ENCODE measurements at regions of chr12 and their contacts with region 1.

Region 1: GRCh38 chr12:442235-442884 is 17.4 kb upstream of the B4GALNT3 start:
- DNase-seq: no peak
- H3K4me3 ChIP-seq: no peak overlapping the region
- CTCF ChIP-seq: peak; percentile 74

Region 2: DNA sequence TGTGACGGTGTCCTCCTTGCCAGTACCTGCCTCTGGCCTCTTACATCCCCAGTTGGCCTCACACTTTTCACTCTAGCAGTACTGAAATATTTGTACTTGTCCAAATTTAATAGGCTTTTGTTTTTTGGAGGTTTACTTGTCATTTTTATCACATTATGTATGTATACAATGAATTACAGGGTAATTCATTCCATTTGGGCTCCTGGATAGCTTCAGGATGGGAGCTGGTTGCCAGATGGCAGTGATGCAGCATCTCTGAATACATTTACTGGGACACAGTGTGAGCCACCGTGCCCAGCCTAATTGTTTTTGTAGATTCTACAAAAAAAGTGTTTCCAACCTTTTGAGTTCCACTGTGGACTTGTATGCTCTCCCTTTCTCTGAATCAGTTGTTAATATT is 27.5 kb before region 1 on chr12:
- CTCF ChIA-PET with region 1: interaction called, 10 read pairs
- POLR2A ChIA-PET with region 1: no interaction called
- DNase-seq: no peak
- H3K4me3 ChIP-seq: no peak overlapping the region
- CTCF ChIP-seq: no peak

Region 3: GRCh38 chr12:464484-465267 is 22.3 kb after region 1 on chr12:
- CTCF ChIA-PET with region 1: interaction called, 157 read pairs
- POLR2A ChIA-PET with region 1: no interaction called
- DNase-seq: no peak
- H3K4me3 ChIP-seq: no peak overlapping the region
- CTCF ChIP-seq: no peak

Region 4: DNA sequence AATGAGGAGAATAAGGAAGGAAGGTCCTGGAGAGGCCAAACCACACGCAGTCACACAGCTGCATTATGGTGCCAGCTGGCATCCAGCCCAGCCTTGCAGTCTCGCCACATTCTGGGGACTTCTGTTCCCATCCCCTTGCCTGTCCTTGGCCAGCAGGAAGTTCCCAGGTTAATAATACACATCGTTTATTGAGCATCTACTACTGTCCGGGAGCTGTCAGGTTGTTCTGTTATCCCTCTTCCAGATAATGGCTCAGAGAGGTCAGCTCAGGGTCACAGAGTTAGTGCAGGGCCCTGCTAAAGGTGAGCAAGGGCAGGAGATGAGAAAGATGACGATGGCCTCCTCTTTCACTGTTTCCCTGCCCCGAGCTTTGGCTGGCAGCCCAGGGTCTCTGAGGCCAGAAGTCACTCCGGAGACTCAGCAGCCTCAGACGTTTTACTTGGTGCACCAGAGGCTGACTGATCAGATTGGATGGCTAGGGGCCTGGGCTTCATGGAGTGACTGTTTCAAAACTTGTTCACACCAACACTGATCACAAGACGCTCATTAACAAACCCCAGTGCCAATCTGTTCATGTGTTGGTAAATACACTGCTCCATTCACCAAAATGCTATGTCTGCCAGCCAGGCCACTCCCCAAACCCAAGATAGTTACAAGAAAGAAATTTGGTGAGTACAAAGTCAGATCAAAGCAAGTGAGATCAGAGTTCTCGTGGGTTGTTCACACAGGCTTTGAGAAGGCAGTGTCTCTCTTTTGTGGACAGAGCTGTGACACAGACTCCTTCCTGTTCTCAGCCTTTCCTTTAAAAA is 96.6 kb after region 1 on chr12:
- CTCF ChIA-PET with region 1: interaction called, 230 read pairs
- POLR2A ChIA-PET with region 1: no interaction called
- DNase-seq: no peak
- H3K4me3 ChIP-seq: no peak overlapping the region
- CTCF ChIP-seq: no peak

Region 5: GRCh38 chr12:569803-570434 is 127.6 kb after region 1 on chr12:
- CTCF ChIA-PET with region 1: interaction called, 19 read pairs
- POLR2A ChIA-PET with region 1: no interaction called
- DNase-seq: no peak
- H3K4me3 ChIP-seq: peak overlapping the region; percentile 63
- CTCF ChIP-seq: peak; percentile 99

Measured in AG04449 (cell line).